CD8-positive, alpha-beta T cell (primary cell): ENCODE measurements at regions of chr18 and their contacts with region 1.

Region 1: GRCh38 chr18:2776601-2777000 is 70.2 kb upstream of the EMILIN2 start:
- DNase-seq: no peak
- ATAC-seq: no peak
- H3K4me3 ChIP-seq: no peak overlapping the region
- H3K4me3 Mint-ChIP-seq: no peak overlapping the region
- H3K27ac ChIP-seq: no peak overlapping the region
- H3K27ac Mint-ChIP-seq: no peak overlapping the region
- H3K4me1 ChIP-seq: no peaks in the 10 kb centered on the region
- H3K4me1 Mint-ChIP-seq: peaks cover 2% of the 10 kb centered on the region
- H3K27me3 ChIP-seq: no peaks in the 10 kb centered on the region
- H3K27me3 Mint-ChIP-seq: no peaks in the 10 kb centered on the region
- CTCF ChIP-seq: no peak

Region 2: GRCh38 chr18:2716394-2717326 is 59.9 kb before region 1 on chr18:
- CTCF ChIA-PET with region 1: no interaction called
- POLR2A ChIA-PET with region 1: no interaction called
- intact Hi-C with region 1: no loop called
- DNase-seq: no peak
- ATAC-seq: no peak
- H3K4me3 ChIP-seq: no peak overlapping the region
- H3K4me3 Mint-ChIP-seq: no peak overlapping the region
- H3K27ac ChIP-seq: peak overlapping the region in 1 of 2 experiments; percentile 22
- H3K27ac Mint-ChIP-seq: no peak overlapping the region
- H3K4me1 ChIP-seq: peaks cover 13% of the 10 kb centered on the region
- H3K4me1 Mint-ChIP-seq: peaks cover 56% of the 10 kb centered on the region
- H3K27me3 ChIP-seq: no peaks in the 10 kb centered on the region
- H3K27me3 Mint-ChIP-seq: no peaks in the 10 kb centered on the region
- CTCF ChIP-seq: no peak

Region 3: GRCh38 chr18:2741651-2742050 is 35.0 kb before region 1 on chr18:
- CTCF ChIA-PET with region 1: no interaction called
- POLR2A ChIA-PET with region 1: no interaction called
- intact Hi-C with region 1: loop called (anchors 5 kb)
- DNase-seq: no peak
- ATAC-seq: no peak
- H3K4me3 ChIP-seq: no peak overlapping the region
- H3K4me3 Mint-ChIP-seq: no peak overlapping the region
- H3K27ac ChIP-seq: no peak overlapping the region
- H3K27ac Mint-ChIP-seq: no peak overlapping the region
- H3K4me1 ChIP-seq: no peaks in the 10 kb centered on the region
- H3K4me1 Mint-ChIP-seq: peaks cover 13% of the 10 kb centered on the region
- H3K27me3 ChIP-seq: no peaks in the 10 kb centered on the region
- H3K27me3 Mint-ChIP-seq: no peaks in the 10 kb centered on the region
- CTCF ChIP-seq: no peak

Region 4: GRCh38 chr18:2758309-2758708 is 18.3 kb before region 1 on chr18:
- CTCF ChIA-PET with region 1: no interaction called
- POLR2A ChIA-PET with region 1: interaction called, 3 read pairs
- intact Hi-C with region 1: loop called in 1 of 2 experiments (anchors 2 kb)
- DNase-seq: no peak
- ATAC-seq: no peak
- H3K4me3 ChIP-seq: no peak overlapping the region
- H3K4me3 Mint-ChIP-seq: no peak overlapping the region
- H3K27ac ChIP-seq: no peak overlapping the region
- H3K27ac Mint-ChIP-seq: peak overlapping the region; percentile 37
- H3K4me1 ChIP-seq: no peaks in the 10 kb centered on the region
- H3K4me1 Mint-ChIP-seq: peaks cover 26% of the 10 kb centered on the region
- H3K27me3 ChIP-seq: no peaks in the 10 kb centered on the region
- H3K27me3 Mint-ChIP-seq: no peaks in the 10 kb centered on the region
- CTCF ChIP-seq: no peak

Region 5: DNA sequence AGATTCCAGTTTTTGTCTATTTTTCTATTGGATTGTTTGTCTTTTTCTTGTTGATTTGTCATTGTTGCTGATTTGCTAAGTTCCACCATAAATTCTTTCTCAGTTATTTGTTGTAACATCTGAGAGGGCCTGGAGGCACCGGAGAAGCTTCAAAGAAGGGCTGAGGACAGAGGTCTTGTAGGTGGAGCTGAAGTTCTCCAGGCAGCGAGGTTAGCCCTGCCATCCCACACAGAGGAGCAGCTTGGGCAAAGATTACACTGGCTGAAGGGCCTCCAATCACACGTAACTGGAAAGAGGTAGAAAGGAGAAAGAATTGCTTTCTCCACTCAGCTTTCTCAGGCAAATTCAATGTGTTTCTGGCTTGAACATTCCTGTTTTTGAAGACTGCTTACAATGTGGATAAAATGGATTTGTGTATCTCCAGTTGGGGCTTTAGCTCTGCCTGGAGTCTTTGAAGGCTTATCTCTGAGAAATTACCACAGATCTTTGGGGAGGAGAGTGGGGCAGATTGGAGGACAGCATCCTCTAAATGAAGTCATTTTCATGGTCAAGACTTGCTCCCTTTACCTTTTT is 49.1 kb after region 1 on chr18:
- CTCF ChIA-PET with region 1: no interaction called
- POLR2A ChIA-PET with region 1: no interaction called
- intact Hi-C with region 1: no loop called
- DNase-seq: no peak
- ATAC-seq: no peak
- H3K4me3 ChIP-seq: no peak overlapping the region
- H3K4me3 Mint-ChIP-seq: no peak overlapping the region
- H3K27ac ChIP-seq: no peak overlapping the region
- H3K27ac Mint-ChIP-seq: no peak overlapping the region
- H3K4me1 ChIP-seq: no peaks in the 10 kb centered on the region
- H3K4me1 Mint-ChIP-seq: no peaks in the 10 kb centered on the region
- H3K27me3 ChIP-seq: no peaks in the 10 kb centered on the region
- H3K27me3 Mint-ChIP-seq: no peaks in the 10 kb centered on the region
- CTCF ChIP-seq: no peak

Region 6: DNA sequence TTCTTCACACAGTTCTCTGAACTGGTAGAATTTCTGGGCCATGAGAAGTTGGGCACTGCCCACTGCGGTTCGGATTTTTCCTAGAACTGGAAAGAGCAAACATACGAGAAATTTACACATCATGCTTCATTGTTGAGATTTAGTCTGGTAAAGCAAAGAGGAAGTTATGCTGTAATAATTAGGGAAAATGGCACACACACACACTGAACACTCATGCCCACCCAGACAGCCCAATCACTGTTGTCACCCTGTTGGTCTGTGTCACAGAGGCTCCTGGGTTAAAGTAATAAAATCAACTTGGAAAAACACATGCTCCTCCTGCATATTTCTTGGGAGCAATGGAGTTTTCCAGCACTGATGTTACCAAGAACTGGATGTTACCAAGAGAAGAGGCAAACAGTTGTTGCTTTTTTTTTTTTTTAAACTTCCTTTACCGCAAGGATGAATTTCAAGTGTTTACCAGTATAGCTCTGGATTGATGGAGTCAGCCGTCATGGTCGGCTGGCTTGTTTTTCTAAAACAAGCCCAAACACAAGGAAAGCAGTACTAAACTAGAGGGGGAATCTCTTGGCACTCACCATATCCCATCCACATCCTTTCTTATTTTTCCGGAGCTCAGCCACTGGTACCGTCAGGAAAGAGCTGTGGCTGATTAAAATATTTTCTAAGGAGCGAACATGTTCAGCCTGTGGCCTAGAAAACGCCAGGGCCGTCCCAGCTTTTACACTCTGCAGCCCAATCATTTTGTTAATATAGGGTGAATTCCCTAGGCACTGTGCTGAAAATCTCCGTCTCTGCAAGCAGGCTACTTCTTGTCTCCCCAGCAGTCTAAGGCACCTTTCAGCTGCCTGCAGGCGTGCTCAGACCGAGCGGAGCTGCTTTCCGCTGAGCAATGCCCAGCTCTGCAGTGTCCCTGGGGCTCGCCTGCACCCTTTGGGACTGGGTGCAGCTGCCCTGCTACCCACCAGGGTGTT is 732.3 kb after region 1 on chr18:
- CTCF ChIA-PET with region 1: no interaction called
- POLR2A ChIA-PET with region 1: no interaction called
- intact Hi-C with region 1: no loop called
- DNase-seq: no peak
- ATAC-seq: no peak
- H3K4me3 ChIP-seq: no peak overlapping the region
- H3K4me3 Mint-ChIP-seq: no peak overlapping the region
- H3K27ac ChIP-seq: no peak overlapping the region
- H3K27ac Mint-ChIP-seq: no peak overlapping the region
- H3K4me1 ChIP-seq: peaks cover 5% of the 10 kb centered on the region
- H3K4me1 Mint-ChIP-seq: peaks cover 10% of the 10 kb centered on the region
- H3K27me3 ChIP-seq: no peaks in the 10 kb centered on the region
- H3K27me3 Mint-ChIP-seq: no peaks in the 10 kb centered on the region
- CTCF ChIP-seq: no peak

Region 7: DNA sequence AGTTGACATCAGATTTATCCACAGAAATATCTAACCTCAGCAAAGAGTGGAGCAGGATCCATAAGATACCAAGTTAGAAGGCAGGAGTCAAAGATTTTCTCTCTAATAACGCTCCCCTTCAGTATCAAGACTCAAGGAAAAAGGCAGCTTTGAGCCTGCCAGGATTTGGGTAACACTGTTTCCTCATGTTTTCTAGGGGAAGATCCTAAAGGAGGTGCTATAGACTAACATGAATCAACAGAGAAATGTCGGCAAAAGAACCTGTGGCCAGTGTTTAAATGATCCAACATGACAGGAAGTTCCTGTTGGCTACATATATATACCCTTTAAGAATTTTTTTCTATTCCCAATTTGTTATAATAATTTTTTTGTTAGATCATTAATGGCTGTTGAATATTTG is 1075.7 kb after region 1 on chr18:
- CTCF ChIA-PET with region 1: no interaction called
- POLR2A ChIA-PET with region 1: no interaction called
- intact Hi-C with region 1: no loop called
- DNase-seq: no peak
- ATAC-seq: no peak
- H3K4me3 ChIP-seq: no peak overlapping the region
- H3K4me3 Mint-ChIP-seq: no peak overlapping the region
- H3K27ac ChIP-seq: no peak overlapping the region
- H3K27ac Mint-ChIP-seq: no peak overlapping the region
- H3K4me1 ChIP-seq: no peaks in the 10 kb centered on the region
- H3K4me1 Mint-ChIP-seq: no peaks in the 10 kb centered on the region
- H3K27me3 ChIP-seq: no peaks in the 10 kb centered on the region
- H3K27me3 Mint-ChIP-seq: no peaks in the 10 kb centered on the region
- CTCF ChIP-seq: no peak